ENCODE measurements at regions of chr5 and their contacts with region 1.

Region 1: DNA sequence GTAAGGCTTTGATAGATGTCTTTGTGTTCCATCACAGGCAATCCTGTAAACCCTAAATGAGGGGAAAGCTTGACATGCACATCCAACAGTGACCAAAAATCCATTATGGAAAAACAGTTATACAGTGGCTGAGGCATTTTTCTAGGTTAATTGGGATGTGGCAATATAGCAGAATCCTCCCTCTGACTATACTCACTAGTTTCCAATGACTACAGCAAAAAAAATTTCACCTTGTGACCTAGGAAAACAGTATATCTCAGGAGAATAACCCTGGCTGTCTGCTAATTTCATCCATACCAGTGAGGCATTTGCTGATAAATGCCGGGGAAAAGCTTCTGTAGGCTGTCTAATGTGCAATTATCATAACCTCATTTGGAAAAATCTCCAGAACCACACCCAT is 49.9 kb upstream of the SNCAIP start:
- DNase-seq: no peak
- H3K4me3 ChIP-seq: no peak overlapping the region
- H3K27ac ChIP-seq: no peak overlapping the region
- H3K4me1 ChIP-seq: peaks cover 2% of the 10 kb centered on the region
- H3K27me3 ChIP-seq: no peaks in the 10 kb centered on the region
- CTCF ChIP-seq: no peak
- EP300 ChIP-seq: no peak
- POLR2A ChIP-seq: no peak

Region 2: DNA sequence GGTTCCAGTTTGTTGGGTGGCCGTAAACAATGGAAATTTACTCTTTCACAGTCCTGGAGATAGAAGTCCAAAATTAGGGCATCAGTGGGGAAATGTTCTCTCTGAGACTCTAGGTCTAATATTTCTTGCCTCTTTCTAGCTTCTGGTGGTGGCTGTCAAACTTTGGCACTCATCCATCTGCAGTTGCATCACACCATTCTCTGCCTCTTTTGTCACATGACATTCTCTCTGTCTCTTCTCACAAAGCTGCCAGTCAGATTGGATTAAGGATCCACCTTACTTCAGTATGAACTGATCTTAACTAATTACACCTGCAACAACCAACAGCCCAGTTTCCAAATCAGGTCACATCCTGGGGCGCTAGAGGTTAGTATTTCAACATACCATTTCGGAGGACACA is 633.3 kb before region 1 on chr5:
- intact Hi-C with region 1: no loop called
- DNase-seq: no peak
- H3K4me3 ChIP-seq: no peak overlapping the region
- H3K27ac ChIP-seq: no peak overlapping the region
- H3K4me1 ChIP-seq: no peaks in the 10 kb centered on the region
- H3K27me3 ChIP-seq: no peaks in the 10 kb centered on the region
- CTCF ChIP-seq: no peak
- EP300 ChIP-seq: no peak
- POLR2A ChIP-seq: no peak

Region 3: DNA sequence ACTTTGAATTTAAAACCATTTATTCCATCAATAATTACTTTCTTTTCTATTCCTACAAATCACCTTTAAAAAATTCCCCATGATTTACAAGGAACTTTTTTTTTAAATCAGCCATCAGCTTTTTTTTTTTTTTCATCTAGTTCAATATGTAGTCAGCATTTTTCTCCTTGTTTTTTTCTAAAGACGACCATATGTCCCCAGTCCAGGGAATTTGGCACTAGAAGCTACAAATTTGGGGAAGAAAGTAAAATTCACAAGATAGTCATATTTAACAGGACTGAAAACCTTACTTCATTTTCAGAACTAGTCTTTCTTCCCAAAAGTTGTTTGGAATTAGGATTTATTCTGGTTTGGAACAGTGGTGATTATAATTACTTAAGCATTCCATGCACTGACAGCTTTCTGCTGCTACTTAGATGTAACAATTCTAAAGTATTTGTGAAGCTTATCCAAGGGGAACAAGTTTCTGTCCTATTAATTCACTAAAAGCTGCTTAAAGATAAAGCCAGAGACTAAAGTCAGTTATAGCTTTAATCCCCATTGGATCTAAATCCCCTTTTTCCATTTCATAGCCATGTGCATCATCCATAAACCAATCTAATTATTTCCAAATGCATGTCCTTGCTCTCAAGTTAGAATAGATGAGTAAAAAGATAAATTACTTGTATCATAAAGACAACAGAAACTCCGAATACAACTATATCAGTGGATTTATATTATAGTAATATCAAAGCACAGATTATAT is 42.5 kb after region 1 on chr5:
- intact Hi-C with region 1: loop called in 1 of 4 experiments (anchors 1 kb)
- DNase-seq: no peak
- H3K4me3 ChIP-seq: no peak overlapping the region
- H3K27ac ChIP-seq: no peak overlapping the region
- H3K4me1 ChIP-seq: no peaks in the 10 kb centered on the region
- H3K27me3 ChIP-seq: no peaks in the 10 kb centered on the region
- CTCF ChIP-seq: no peak
- EP300 ChIP-seq: no peak
- POLR2A ChIP-seq: no peak

Region 4: DNA sequence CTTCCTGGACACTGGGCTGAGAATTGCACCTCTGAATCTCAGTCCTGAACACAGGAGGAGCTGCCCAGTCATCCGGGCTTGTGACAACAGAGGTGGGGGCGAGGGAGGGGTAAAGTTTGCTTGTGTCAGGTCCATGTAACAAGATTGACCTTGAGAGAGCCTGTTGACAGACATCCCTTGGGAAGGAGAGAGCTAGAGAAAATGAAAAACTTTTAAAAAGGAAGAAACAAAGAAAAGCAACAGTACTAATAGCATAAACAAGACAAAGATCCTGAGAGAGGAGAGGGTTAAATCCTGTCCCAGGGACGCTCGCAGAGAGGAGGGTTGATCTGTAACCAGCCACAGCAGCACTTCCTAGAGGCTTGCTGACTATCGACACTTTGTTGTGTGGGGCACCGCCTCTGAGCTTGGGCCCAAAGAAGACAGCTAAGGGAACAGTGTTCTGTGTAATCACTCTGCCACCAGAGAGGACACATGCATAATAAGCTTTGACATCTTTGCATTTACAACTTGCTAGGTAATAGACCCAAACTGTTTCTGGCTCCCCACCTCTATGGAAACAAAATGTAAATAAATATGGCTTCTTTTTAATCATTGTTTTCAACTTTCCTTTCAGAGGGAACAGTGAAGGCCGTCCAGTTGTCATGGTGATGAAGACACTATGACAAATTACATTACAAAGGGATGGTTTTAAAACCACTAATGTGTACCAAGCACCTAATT is 1613.6 kb after region 1 on chr5:
- intact Hi-C with region 1: no loop called
- DNase-seq: no peak
- H3K4me3 ChIP-seq: no peak overlapping the region
- H3K27ac ChIP-seq: no peak overlapping the region
- H3K4me1 ChIP-seq: peaks cover 3% of the 10 kb centered on the region
- H3K27me3 ChIP-seq: no peaks in the 10 kb centered on the region
- CTCF ChIP-seq: no peak
- EP300 ChIP-seq: no peak
- POLR2A ChIP-seq: no peak